Naive thymus-derived CD8-positive, alpha-beta T cell (primary cell): ENCODE measurements at regions of chr1 and their contacts with region 1.

Region 1: GRCh38 chr1:154157520-154158306 is 2.8 kb upstream of the NUP210L start:
- DNase-seq: peak; percentile 23 to 90 (median 76)
- ATAC-seq: peak; percentile 98
- H3K4me3 Mint-ChIP-seq: peak overlapping the region; percentile 54 to 85 (median 80)
- H3K27ac Mint-ChIP-seq: peak overlapping the region; percentile 93 to 98 (median 95)
- H3K4me1 Mint-ChIP-seq: peaks cover 39 to 73% (median 65%) of the 10 kb centered on the region in 4 donors
- H3K27me3 Mint-ChIP-seq: no peaks in the 10 kb centered on the region

Region 2: GRCh38 chr1:154183045-154183915 is 25.6 kb after region 1 on chr1:
- POLR2A ChIA-PET with region 1: interaction called, 73 read pairs
- DNase-seq: peak; percentile 87 to 96 (median 94)
- ATAC-seq: peak; percentile 80 to 81
- H3K4me3 Mint-ChIP-seq: peak overlapping the region; percentile 97 to 100 (median 100)
- H3K27ac Mint-ChIP-seq: peak overlapping the region; percentile 95 to 100 (median 99)
- H3K4me1 Mint-ChIP-seq: peaks cover 36 to 51% (median 46%) of the 10 kb centered on the region in 4 donors
- H3K27me3 Mint-ChIP-seq: peaks cover 0 to 6% (median 0%) of the 10 kb centered on the region in 5 donors

Region 3: DNA sequence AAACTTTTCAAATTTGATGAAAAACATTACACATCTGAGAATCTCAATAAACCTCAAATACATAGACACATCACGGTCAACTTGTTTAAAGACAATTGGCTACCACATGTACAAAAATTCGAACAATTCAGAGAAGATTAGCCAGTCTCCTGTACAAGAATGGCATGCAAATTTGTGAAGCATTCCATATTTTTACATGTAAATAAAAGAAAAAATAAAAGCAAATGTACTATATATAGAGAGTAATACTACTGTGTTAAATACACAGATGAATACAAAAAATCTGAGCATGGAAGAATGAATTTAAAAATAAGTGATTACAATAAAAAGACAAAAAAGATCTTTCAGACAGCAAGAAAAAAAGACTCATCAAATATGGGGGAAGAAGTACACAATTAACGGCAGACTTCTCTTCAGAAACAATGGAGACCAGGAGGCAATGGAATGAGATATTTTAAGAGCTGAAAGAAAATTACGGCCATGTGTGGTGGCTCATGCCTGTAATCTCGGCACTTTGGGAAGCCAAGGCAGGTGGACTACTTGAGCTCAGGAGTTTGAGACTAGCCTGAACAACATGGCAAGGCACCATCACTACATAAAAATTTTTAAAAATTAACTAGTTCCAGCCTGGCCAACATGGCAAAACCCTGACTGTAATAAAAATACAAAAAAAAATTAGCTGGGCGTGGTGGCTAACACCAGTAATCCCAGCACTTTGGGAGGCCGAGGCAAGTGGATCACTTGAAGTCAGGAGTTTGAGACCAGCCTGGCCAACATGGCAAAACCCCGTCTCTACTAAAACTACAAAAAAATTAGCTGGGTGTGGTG is 137.9 kb after region 1 on chr1:
- POLR2A ChIA-PET with region 1: no interaction called
- DNase-seq: peak in 1 of 10 donors; percentile 9
- ATAC-seq: no peak
- H3K4me3 Mint-ChIP-seq: no peak overlapping the region
- H3K27ac Mint-ChIP-seq: no peak overlapping the region
- H3K4me1 Mint-ChIP-seq: no peaks in the 10 kb centered on the region
- H3K27me3 Mint-ChIP-seq: peaks cover 0 to 3% (median 0%) of the 10 kb centered on the region in 5 donors

Region 4: DNA sequence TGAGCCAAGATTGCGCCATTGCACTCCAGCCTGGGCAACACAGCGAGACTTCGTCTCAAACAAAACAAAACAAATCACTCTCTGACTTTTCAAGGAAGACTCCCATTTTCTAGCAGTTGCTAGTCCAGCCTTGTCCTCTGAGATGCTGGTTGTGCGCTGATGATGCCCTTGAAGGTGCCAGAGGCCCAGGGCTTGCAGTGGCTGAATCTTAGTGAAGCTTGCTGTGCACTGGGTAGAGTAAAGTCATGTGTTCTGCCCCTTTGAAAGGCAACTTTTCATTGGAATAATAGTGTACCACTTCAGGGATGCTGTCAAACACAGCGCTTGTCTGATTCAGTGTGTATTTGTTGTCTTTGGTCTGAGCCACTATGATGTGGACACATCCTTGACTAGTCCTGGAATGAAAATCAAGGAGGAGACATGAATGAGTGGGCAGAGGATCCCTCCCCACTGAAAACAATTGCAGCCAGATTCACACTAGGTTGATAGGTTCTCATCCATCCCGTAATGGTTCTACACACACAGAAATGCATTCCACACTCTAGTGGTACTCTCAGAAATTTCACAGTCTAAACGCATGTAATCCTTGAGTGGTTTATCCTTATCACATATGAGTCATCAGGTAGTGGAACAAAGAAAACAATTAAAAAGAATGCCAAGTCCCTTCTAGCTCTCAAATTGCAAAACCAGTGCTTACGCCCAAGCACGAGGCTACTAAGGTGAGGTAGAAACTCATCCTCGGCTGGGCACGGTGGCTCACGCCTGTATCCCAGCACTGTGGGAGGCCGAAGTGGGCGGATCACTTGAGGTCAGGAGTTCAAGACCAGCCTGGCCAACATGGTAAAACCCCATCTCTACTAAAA is 326.5 kb after region 1 on chr1:
- POLR2A ChIA-PET with region 1: no interaction called
- DNase-seq: no peak
- ATAC-seq: no peak
- H3K4me3 Mint-ChIP-seq: no peak overlapping the region
- H3K27ac Mint-ChIP-seq: peak overlapping the region in 1 of 10 donors; percentile 53
- H3K4me1 Mint-ChIP-seq: peaks cover 2 to 5% (median 2%) of the 10 kb centered on the region in 4 donors
- H3K27me3 Mint-ChIP-seq: peaks cover 0 to 8% (median 2%) of the 10 kb centered on the region in 5 donors